ENCODE measurements at regions of chr13 and their contacts with region 1.

Region 1: GRCh38 chr13:41588899-41589298 is 131.5 kb downstream of the RGCC start:
- DNase-seq: peak; percentile 77 to 90 (median 85)
- H3K4me3 ChIP-seq: no peak overlapping the region
- H3K4me3 Mint-ChIP-seq: peak overlapping the region in 1 of 2 donors; percentile 3
- H3K27ac ChIP-seq: peak overlapping the region in 1 of 2 donors; percentile 77
- H3K27ac Mint-ChIP-seq: peak overlapping the region; percentile 66 to 94 (median 89)
- H3K4me1 ChIP-seq: peaks cover 24 to 31% of the 10 kb centered on the region in 2 donors
- H3K4me1 Mint-ChIP-seq: peaks cover 32% of the 10 kb centered on the region
- H3K27me3 ChIP-seq: no peaks in the 10 kb centered on the region
- H3K27me3 Mint-ChIP-seq: no peaks in the 10 kb centered on the region
- CTCF ChIP-seq: no peak

Region 2: GRCh38 chr13:41193919-41194824 is 394.7 kb before region 1 on chr13 and contains the start of gene KBTBD7:
- intact Hi-C with region 1: no loop called
- DNase-seq: peak; percentile 86 to 89 (median 87)
- H3K4me3 ChIP-seq: peak within 1 kb of the TSS; percentile 59 to 94 (median 80)
- H3K4me3 Mint-ChIP-seq: peak within 1 kb of the TSS; percentile 90 to 96
- H3K27ac ChIP-seq: peak within 1 kb of the TSS; percentile 90 to 93
- H3K27ac Mint-ChIP-seq: peak within 1 kb of the TSS; percentile 93 to 97 (median 96)
- H3K4me1 ChIP-seq: peaks cover 11% of the 10 kb centered on the region in 2 donors
- H3K4me1 Mint-ChIP-seq: peaks cover 31% of the 10 kb centered on the region
- H3K27me3 ChIP-seq: no peaks in the 10 kb centered on the region
- H3K27me3 Mint-ChIP-seq: peaks cover 2% of the 10 kb centered on the region in 3 donors
- CTCF ChIP-seq: no peak
- polyA plus RNA-seq, gene KBTBD7: 0.43 to 7.7 (median 5.5) TPM

Region 3: DNA sequence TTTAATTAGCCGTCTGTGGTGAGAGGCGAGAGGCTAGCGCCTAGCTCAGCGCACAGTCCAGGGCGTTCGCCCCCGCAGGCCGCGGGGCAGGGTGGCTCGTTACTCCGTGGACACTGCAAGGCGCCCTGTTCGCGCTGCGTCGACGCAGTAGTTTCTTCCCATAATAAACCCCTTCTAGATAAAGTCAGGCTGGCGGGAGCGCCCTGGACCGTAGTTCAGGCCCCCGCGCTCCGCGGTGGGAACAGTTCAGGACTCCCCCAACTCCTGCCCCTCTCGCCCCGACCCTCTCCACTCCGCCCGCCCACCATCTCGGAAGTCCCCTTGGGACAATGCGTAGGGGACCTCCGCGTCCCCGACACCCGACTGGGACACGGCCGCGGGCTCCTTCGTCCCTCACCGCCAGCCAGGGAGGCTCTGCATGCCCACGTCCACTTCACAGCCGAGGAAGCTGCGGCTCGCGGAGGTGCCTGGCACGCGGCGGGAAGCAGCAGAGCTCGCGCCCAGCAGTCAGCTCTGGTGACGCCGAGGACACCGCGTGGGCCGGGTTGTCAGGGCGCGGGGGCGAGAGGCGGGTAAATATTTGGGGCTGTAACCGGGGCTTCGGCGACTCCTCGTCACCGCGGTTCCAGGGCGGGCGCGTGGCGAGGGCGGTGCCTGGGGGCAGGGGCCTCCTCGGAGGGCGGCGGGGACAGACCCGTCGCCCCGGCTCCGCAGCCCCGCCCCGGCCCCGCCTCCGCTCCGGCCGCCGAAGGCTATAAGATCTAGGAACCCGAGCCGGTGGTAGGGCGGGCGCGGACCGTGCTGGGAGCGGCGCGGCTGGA is 131.9 kb before region 1 on chr13 and contains the start of gene RGCC:
- intact Hi-C with region 1: loop called in 1 of 2 experiments (anchors 5 kb)
- DNase-seq: peak; percentile 91 to 95 (median 93)
- H3K4me3 ChIP-seq: peak within 1 kb of the TSS; percentile 50 to 92 (median 79)
- H3K4me3 Mint-ChIP-seq: peak within 1 kb of the TSS; percentile 89 to 94
- H3K27ac ChIP-seq: peak within 1 kb of the TSS in 1 of 2 donors; percentile 72
- H3K27ac Mint-ChIP-seq: peak within 1 kb of the TSS; percentile 23 to 93 (median 87)
- H3K4me1 ChIP-seq: peaks cover 41 to 49% of the 10 kb centered on the region in 2 donors
- H3K4me1 Mint-ChIP-seq: peaks cover 43% of the 10 kb centered on the region
- H3K27me3 ChIP-seq: peaks cover 6 to 30% of the 10 kb centered on the region in 2 donors
- H3K27me3 Mint-ChIP-seq: peaks cover 24 to 49% (median 35%) of the 10 kb centered on the region in 3 donors
- CTCF ChIP-seq: no peak
- polyA plus RNA-seq, gene RGCC: 4.3 to 49.5 (median 26.0) TPM

Region 4: DNA sequence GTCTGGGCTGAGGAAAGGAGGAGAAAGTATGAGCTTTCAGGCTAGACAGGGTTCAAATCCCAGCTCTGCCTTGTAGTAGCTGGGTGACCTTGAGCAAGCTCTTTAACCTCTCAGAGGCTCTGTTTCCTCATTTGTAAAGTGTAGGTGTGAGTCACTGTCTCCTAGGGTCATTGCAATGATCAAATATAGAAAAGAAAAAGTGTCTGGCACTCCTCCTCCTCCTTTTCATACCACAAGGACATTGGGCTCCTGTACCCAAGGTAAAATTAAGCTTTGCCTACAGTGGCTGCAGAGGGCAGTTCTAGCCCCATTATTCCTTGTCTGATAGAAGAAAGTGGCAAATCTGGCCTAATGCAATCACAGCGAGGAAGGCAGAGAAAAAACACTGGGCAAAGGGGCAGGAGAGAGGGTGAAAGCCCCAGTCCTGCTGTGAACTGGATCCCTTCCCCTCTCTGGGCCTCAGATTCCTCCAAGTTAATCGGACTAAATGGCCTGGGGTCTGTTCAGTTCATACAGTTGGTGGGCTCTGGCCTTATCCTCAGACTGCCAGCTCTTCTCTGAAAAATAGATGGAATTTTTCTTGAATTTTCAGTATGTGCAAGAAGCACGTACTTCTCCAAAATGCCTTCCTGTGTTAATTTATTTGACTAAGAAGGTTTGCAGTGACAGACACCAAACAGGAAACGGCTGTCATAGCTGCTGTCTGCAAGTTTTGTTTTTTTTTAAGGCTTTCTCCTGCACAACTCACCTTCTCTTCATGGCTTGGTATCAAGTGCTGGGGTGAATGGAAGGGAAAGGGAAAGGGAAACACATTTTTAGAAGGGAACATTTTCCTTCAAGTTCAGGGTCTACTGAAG is 96.3 kb before region 1 on chr13:
- intact Hi-C with region 1: loop called in 1 of 2 experiments (anchors 10 kb)
- DNase-seq: peak; percentile 68 to 90 (median 89)
- H3K4me3 ChIP-seq: peak overlapping the region in 1 of 3 experiments; percentile 31
- H3K4me3 Mint-ChIP-seq: peak overlapping the region in 1 of 2 donors; percentile 65
- H3K27ac ChIP-seq: peak overlapping the region; percentile 80 to 97
- H3K27ac Mint-ChIP-seq: peak overlapping the region; percentile 86 to 97 (median 93)
- H3K4me1 ChIP-seq: peaks cover 35 to 36% of the 10 kb centered on the region in 2 donors
- H3K4me1 Mint-ChIP-seq: peaks cover 41% of the 10 kb centered on the region
- H3K27me3 ChIP-seq: no peaks in the 10 kb centered on the region
- H3K27me3 Mint-ChIP-seq: peaks cover 2 to 4% (median 3%) of the 10 kb centered on the region in 3 donors
- CTCF ChIP-seq: no peak

Region 5: GRCh38 chr13:41639955-41640780 is 51.3 kb after region 1 on chr13:
- intact Hi-C with region 1: loop called in 1 of 2 experiments (anchors 5 kb)
- DNase-seq: no peak
- H3K4me3 ChIP-seq: no peak overlapping the region
- H3K4me3 Mint-ChIP-seq: no peak overlapping the region
- H3K27ac ChIP-seq: no peak overlapping the region
- H3K27ac Mint-ChIP-seq: no peak overlapping the region
- H3K4me1 ChIP-seq: peaks cover under 1 to 5% of the 10 kb centered on the region in 2 donors
- H3K4me1 Mint-ChIP-seq: peaks cover 7% of the 10 kb centered on the region
- H3K27me3 ChIP-seq: no peaks in the 10 kb centered on the region
- H3K27me3 Mint-ChIP-seq: peaks cover 0 to 4% (median 0%) of the 10 kb centered on the region in 3 donors
- CTCF ChIP-seq: no peak

Region 6: GRCh38 chr13:41767801-41768200 is 178.9 kb after region 1 on chr13:
- intact Hi-C with region 1: no loop called
- DNase-seq: no peak
- H3K4me3 ChIP-seq: no peak overlapping the region
- H3K4me3 Mint-ChIP-seq: no peak overlapping the region
- H3K27ac ChIP-seq: no peak overlapping the region
- H3K27ac Mint-ChIP-seq: no peak overlapping the region
- H3K4me1 ChIP-seq: peaks cover 5 to 8% of the 10 kb centered on the region in 2 donors
- H3K4me1 Mint-ChIP-seq: peaks cover 10% of the 10 kb centered on the region
- H3K27me3 ChIP-seq: no peaks in the 10 kb centered on the region
- H3K27me3 Mint-ChIP-seq: no peaks in the 10 kb centered on the region
- CTCF ChIP-seq: no peak